Right cardiac atrium (tissue), 5 donors: ENCODE measurements at regions of chr4 and their contacts with region 1.

Region 1: GRCh38 chr4:150010525-150011126 is 67.6 kb upstream of the DCLK2 start:
- DNase-seq: peak in 1 of 3 donors; percentile 39
- ATAC-seq: peak; percentile 76 to 83
- H3K4me3 ChIP-seq: no peak overlapping the region
- H3K27ac ChIP-seq: no peak overlapping the region
- H3K4me1 ChIP-seq: peaks cover 2% of the 10 kb centered on the region
- H3K27me3 ChIP-seq: no peaks in the 10 kb centered on the region

Region 2: DNA sequence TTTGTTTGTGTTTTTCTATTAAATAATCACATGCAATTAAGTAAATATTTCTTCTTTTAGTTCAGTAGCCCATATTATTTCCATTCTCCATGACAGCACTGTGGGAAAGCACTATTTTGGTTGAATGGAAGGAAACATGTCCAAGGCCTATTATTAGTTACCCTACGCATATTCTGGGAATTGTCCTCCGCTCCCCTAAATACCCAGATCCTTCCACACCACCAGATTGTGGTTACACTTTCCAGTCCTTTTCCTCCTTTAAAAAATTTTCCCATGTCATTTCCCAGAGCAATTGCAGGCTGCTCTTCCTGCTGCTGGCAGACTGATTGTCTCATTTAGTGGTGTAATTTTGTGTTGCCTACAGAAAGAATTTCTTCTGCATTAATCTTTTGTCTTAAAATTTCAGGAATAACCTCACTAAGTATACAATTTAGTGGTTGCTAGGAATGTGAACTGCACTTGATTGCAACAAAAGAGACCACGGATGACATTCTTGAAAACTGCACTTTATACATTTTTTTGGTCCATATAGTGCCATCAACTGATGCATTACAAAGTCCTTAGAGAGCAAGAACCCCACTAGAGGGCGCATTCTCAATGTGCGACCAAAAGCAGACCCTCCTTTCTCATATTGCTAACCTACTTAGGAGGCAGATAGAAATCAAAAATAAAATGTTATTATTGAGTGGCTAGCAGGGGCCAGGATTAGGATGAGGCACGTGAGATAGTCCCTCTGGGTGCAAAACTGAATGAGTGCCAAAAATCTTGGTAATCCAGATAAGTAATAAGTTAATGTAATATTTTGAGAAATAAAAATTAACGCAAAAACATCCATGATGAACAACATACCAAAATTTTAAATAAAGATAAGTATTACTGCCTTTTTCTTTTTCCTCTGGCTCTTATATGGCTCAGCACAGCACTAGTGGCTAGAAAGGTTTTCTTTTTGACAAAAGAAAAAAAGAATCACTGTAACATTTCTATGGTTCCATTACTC is 96.2 kb before region 1 on chr4:
- intact Hi-C with region 1: no loop called
- DNase-seq: no peak
- ATAC-seq: no peak
- H3K4me3 ChIP-seq: no peak overlapping the region
- H3K27ac ChIP-seq: no peak overlapping the region
- H3K4me1 ChIP-seq: no peaks in the 10 kb centered on the region
- H3K27me3 ChIP-seq: no peaks in the 10 kb centered on the region

Region 3: GRCh38 chr4:150209140-150209829 is 198.7 kb after region 1 on chr4:
- intact Hi-C with region 1: loop called (anchors 2 to 10 kb)
- DNase-seq: peak; percentile 66 to 87 (median 80)
- ATAC-seq: peak; percentile 63 to 75
- H3K4me3 ChIP-seq: no peak overlapping the region
- H3K27ac ChIP-seq: no peak overlapping the region
- H3K4me1 ChIP-seq: peaks cover 2% of the 10 kb centered on the region
- H3K27me3 ChIP-seq: no peaks in the 10 kb centered on the region

Region 4: DNA sequence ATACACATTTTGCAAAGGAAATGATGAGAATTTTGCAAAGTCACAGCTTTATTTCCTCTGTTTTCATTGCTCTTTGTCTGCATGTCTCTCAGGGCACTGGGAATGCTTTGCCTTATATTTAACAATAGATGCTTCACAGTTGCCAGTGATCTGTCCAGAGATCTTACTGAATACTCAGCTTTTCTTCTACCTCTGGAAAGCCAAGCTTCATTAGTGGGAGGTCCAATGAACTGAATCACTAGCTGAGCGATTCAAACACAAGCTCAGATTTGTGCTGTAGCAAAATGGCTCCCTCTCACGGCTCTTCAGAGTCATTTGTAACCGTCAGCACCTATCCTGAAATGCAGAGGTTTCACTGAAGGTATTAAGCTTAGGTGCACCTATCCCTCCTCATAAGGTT is 206.6 kb after region 1 on chr4:
- intact Hi-C with region 1: loop called in 2 of 4 experiments (anchors 5 to 10 kb)
- DNase-seq: no peak
- ATAC-seq: peak in 1 of 2 donors; percentile 36
- H3K4me3 ChIP-seq: no peak overlapping the region
- H3K27ac ChIP-seq: no peak overlapping the region
- H3K4me1 ChIP-seq: no peaks in the 10 kb centered on the region
- H3K27me3 ChIP-seq: no peaks in the 10 kb centered on the region

Region 5: DNA sequence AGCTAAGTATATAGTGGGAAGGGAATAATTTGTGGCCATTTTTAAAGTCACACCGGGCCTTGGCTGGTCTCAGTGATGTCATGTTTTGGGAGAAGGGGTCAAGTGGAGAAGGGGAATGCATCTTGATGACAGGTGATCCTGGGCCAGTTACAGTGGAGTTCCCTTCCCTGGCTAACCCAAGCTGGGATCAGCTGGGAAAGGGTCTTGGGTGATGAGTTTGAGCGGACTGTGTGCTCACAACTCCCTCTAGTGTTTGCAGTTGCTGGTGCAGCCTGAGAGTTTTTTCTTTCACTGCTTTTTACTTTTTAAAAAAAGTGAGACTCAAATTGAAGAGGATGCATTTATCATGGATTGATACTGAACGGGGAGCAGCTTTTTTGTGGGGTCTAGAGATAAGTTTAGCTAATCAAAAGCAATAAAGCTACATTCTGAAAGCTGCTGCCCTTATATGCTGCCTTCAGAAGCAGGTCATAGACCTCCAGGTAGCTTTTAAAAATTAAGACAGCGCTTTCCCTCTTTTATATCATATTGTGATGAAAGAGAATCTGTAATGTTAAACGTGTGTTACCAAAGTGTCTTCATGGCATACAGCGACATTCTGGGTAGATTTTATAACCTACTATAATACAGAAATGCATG is 232.3 kb after region 1 on chr4:
- intact Hi-C with region 1: loop called in 2 of 4 experiments (anchors 5 to 10 kb)
- DNase-seq: no peak
- ATAC-seq: peak in 1 of 2 donors; percentile 51
- H3K4me3 ChIP-seq: no peak overlapping the region
- H3K27ac ChIP-seq: no peak overlapping the region
- H3K4me1 ChIP-seq: no peaks in the 10 kb centered on the region
- H3K27me3 ChIP-seq: no peaks in the 10 kb centered on the region